ENCODE measurements at regions of chr11 and their contacts with region 1.

Region 1: GRCh38 chr11:133947321-133947756 is 9.4 kb downstream of the IGSF9B start:
- DNase-seq: peak; percentile 49 to 76 (median 74)
- ATAC-seq: peak; percentile 66
- H3K4me3 ChIP-seq: peak overlapping the region; percentile 39
- H3K4me3 Mint-ChIP-seq: peak overlapping the region; percentile 50 to 97 (median 76)
- H3K27ac ChIP-seq: peak overlapping the region; percentile 44
- H3K27ac Mint-ChIP-seq: peak overlapping the region; percentile 60 to 94 (median 85)
- H3K4me1 ChIP-seq: peaks cover 50 to 60% of the 10 kb centered on the region in 2 donors
- H3K4me1 Mint-ChIP-seq: peaks cover 41 to 76% (median 64%) of the 10 kb centered on the region in 7 donors
- H3K27me3 ChIP-seq: no peaks in the 10 kb centered on the region
- H3K27me3 Mint-ChIP-seq: no peaks in the 10 kb centered on the region

Region 2: GRCh38 chr11:134033696-134034491 is 86.6 kb after region 1 on chr11:
- CTCF ChIA-PET with region 1: interaction called, 4 read pairs
- POLR2A ChIA-PET with region 1: interaction called, 18 read pairs
- intact Hi-C with region 1: loop called (anchors 1 kb)
- DNase-seq: peak in 8 of 9 donors; percentile 38 to 74 (median 60)
- ATAC-seq: peak; percentile 77
- H3K4me3 ChIP-seq: peak overlapping the region; percentile 25
- H3K4me3 Mint-ChIP-seq: peak overlapping the region; percentile 63 to 95 (median 75)
- H3K27ac ChIP-seq: peak overlapping the region; percentile 67
- H3K27ac Mint-ChIP-seq: peak overlapping the region; percentile 74 to 98 (median 85)
- H3K4me1 ChIP-seq: peaks cover 29 to 46% of the 10 kb centered on the region in 2 donors
- H3K4me1 Mint-ChIP-seq: peaks cover 33 to 79% (median 65%) of the 10 kb centered on the region in 7 donors
- H3K27me3 ChIP-seq: no peaks in the 10 kb centered on the region
- H3K27me3 Mint-ChIP-seq: peaks cover 0 to 24% (median 0%) of the 10 kb centered on the region in 5 donors

Region 3: DNA sequence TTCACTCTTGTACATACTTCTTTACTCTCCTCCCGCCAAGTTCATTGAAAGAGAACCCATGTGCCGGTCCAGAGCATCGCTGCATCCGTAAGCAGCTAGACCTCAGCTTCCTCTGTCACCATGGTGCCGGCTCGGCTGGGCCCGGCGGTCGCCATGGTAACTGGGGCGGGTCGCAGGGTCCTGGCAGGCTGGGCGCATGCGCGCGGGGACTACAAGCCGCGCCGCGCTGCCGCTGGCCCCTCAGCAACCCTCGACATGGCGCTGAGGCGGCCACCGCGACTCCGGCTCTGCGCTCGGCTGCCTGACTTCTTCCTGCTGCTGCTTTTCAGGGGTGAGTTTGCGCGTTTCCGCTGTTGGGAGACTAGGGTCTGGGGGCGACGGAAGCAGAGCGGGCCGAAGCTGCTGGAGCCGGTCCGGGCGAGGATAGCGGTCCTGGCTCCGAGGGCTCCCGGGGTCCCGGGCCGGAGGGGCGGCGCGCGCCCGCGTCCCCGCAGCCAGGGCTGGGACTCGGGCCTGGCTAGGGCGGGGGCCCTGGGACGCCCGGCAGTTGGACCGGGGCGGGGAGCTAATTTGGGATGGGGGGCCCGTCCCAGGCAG is 121.6 kb after region 1 on chr11 and contains the start of gene JAM3:
- CTCF ChIA-PET with region 1: interaction called, 4 read pairs
- POLR2A ChIA-PET with region 1: no interaction called
- intact Hi-C with region 1: loop called in 1 of 2 experiments (anchors 2 kb)
- DNase-seq: peak; percentile 95 to 97 (median 96)
- ATAC-seq: peak; percentile 95
- H3K4me3 ChIP-seq: peak within 1 kb of the TSS; percentile 71
- H3K4me3 Mint-ChIP-seq: peak within 1 kb of the TSS; percentile 84 to 97 (median 92)
- H3K27ac ChIP-seq: peak within 1 kb of the TSS; percentile 71
- H3K27ac Mint-ChIP-seq: peak within 1 kb of the TSS; percentile 59 to 96 (median 89)
- H3K4me1 ChIP-seq: peaks cover 6% of the 10 kb centered on the region in 2 donors
- H3K4me1 Mint-ChIP-seq: peaks cover 5 to 22% (median 13%) of the 10 kb centered on the region in 7 donors
- H3K27me3 ChIP-seq: no peaks in the 10 kb centered on the region
- H3K27me3 Mint-ChIP-seq: peaks cover 0 to 80% (median 6%) of the 10 kb centered on the region in 5 donors
- total RNA-seq, gene JAM3: 4.8 to 8.2 (median 6.3) TPM

Region 4: DNA sequence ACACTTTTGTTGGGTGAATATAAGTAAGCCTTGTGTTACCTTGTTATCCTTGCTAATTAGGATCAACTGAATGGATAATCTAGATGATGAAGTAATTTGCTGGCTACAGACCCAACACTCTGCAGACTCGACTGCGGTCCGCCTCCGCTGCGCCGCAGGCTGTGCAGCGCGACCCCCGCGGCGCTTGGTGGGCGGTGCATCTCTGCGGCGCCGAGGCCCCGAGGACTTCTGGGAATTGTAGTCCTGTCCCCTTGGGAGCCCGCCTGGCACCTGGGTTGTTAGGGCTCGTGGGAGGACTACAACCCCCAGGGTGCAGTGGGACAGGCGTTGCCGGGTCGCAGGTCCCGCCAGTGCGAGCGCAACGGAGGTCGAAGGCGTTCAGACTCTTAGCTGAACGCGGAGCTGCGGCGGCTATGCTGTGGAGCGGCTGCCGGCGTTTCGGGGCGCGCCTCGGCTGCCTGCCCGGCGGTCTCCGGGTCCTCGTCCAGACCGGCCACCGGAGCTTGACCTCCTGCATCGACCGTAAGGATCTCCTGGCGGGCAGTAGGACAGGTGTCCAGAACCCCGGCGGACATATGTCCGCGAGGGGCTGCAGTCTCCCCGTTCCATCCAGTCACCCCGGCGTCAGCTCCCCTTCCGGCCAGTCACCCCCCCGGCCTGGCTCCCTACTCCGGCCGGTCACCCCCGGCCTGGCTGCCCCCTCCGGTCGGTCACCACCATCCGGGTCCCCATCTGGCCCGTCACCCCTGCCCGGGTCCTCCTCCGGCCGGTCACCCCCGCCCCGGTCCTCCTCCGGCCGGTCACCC is 306.1 kb after region 1 on chr11 and contains the starts of genes ACAD8 and THYN1:
- CTCF ChIA-PET with region 1: no interaction called
- POLR2A ChIA-PET with region 1: no interaction called
- intact Hi-C with region 1: loop called in 1 of 2 experiments (anchors 1 kb)
- DNase-seq: peak; percentile 82 to 98 (median 95)
- ATAC-seq: peak; percentile 100
- H3K4me3 ChIP-seq: peak within 1 kb of the TSS; percentile 89
- H3K4me3 Mint-ChIP-seq: peak within 1 kb of the TSS; percentile 79 to 99 (median 94)
- H3K27ac ChIP-seq: peak within 1 kb of the TSS; percentile 73
- H3K27ac Mint-ChIP-seq: peak within 1 kb of the TSS; percentile 75 to 92 (median 88)
- H3K4me1 ChIP-seq: peaks cover 16 to 18% of the 10 kb centered on the region in 2 donors
- H3K4me1 Mint-ChIP-seq: peaks cover 24 to 47% (median 40%) of the 10 kb centered on the region in 7 donors
- H3K27me3 ChIP-seq: no peaks in the 10 kb centered on the region
- H3K27me3 Mint-ChIP-seq: no peaks in the 10 kb centered on the region
- total RNA-seq, gene ACAD8: 18.5 to 40.2 (median 26.1) TPM
- total RNA-seq, gene THYN1: 34.4 to 67.7 (median 62.5) TPM

Measured in naive thymus-derived CD4-positive, alpha-beta T cell (primary cell).